GM10248 (cell line): ENCODE measurements at regions of chr2 and their contacts with region 1.

Region 1: GRCh38 chr2:65955259-65955658 is 479.7 kb upstream of the MEIS1 start:
- DNase-seq: no peak
- CTCF ChIP-seq: no peak

Region 2: DNA sequence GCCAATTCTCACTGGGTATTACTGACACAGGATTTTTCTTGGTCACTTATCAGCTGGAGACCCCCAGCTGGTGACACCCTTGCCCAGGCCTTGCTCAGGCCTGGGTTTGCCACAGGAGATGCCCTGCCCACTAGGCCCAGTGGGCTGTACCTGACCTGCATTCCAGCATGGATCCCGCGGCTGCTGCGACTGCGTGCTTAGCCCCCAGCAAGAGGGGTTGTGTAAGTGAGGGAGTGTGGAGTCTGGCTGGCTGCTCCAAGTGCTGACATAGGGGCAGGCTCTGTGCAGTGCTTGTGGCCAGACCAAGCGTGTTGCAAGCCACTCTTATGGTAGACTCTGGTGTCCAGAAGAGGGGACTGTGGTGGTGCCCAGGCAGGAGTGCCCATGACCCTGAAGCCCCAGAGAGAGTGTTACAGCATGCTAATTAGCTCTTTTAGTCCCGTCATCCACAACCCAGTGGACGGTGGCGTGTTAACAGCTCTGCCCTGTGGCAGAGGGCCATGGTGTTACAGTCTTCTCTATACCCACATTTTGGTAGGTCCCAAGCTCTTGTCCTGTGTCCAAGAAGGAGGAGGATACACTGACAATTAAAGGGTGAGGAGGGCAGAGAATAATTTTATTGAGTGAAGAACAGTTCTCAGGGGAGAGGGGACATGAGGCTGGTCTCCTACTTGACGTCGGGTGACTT is 12.0 kb before region 1 on chr2:
- CTCF ChIA-PET with region 1: interaction called, 10 read pairs
- POLR2A ChIA-PET with region 1: no interaction called
- DNase-seq: no peak
- CTCF ChIP-seq: no peak